ENCODE measurements at regions of chr15 and their contacts with region 1.

Region 1: DNA sequence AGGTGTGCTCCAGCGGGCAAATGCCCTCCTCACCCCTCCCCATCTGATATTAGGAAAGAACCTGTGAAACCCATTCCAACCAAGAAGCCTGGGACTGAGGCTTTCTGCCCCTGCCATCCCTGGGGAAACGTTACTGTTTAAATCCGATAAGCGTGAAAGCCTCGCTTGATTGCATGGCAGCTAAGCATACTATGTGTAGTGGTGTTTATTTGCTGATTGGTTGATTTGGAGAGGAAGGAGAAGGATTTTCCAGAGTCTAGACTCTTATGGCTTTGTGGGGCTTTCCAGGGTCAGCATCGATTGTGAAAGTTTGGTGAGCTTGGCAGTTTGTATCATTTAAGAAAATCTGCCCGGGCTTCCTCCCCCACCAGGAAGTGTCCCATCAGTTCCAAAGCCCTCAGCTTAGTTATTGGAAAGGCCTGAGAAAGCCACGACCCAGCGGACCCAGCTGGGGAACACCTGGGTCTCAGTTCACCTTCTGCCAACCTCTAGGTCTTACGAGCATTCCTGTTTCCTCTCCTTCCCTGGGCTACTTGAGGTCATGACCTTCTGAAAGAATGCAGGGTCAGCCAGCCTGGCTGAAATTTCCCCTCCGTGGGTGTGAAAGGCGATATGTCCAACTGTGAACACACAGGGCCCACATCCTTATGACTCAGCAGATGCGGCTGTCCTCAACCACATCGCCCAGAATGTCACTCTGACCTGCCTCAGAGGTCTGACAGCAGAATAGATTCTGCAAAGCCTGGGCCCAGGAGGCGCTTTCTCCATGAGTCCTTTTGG is 62.8 kb upstream of the HERC1 start:
- DNase-seq: peak; percentile 45 to 67
- ATAC-seq: peak; percentile 59 to 80 (median 70)
- H3K4me3 ChIP-seq: no peak overlapping the region
- H3K4me3 Mint-ChIP-seq: peak overlapping the region; percentile 83
- H3K27ac ChIP-seq: peak overlapping the region; percentile 34
- H3K27ac Mint-ChIP-seq: peak overlapping the region; percentile 75 to 96
- H3K4me1 ChIP-seq: peaks cover 92% of the 10 kb centered on the region
- H3K4me1 Mint-ChIP-seq: peaks cover 89 to 93% of the 10 kb centered on the region in 2 donors
- H3K27me3 ChIP-seq: no peaks in the 10 kb centered on the region
- H3K27me3 Mint-ChIP-seq: no peaks in the 10 kb centered on the region
- CTCF ChIP-seq: no peak

Region 2: GRCh38 chr15:63939531-63940130 is 43.1 kb after region 1 on chr15:
- intact Hi-C with region 1: loop called (anchors 5 kb)
- DNase-seq: peak in 1 of 2 donors; percentile 55
- ATAC-seq: peak; percentile 80 to 86 (median 80)
- H3K4me3 ChIP-seq: no peak overlapping the region
- H3K4me3 Mint-ChIP-seq: peak overlapping the region; percentile 80
- H3K27ac ChIP-seq: peak overlapping the region; percentile 56
- H3K27ac Mint-ChIP-seq: peak overlapping the region; percentile 90 to 93
- H3K4me1 ChIP-seq: peaks cover 36% of the 10 kb centered on the region
- H3K4me1 Mint-ChIP-seq: peaks cover 32 to 58% of the 10 kb centered on the region in 2 donors
- H3K27me3 ChIP-seq: no peaks in the 10 kb centered on the region
- H3K27me3 Mint-ChIP-seq: no peaks in the 10 kb centered on the region
- CTCF ChIP-seq: no peak

Measured in natural killer cell (primary cell).